AG04450 (cell line): ENCODE measurements at regions of chr12 and their contacts with region 1.

Region 1: DNA sequence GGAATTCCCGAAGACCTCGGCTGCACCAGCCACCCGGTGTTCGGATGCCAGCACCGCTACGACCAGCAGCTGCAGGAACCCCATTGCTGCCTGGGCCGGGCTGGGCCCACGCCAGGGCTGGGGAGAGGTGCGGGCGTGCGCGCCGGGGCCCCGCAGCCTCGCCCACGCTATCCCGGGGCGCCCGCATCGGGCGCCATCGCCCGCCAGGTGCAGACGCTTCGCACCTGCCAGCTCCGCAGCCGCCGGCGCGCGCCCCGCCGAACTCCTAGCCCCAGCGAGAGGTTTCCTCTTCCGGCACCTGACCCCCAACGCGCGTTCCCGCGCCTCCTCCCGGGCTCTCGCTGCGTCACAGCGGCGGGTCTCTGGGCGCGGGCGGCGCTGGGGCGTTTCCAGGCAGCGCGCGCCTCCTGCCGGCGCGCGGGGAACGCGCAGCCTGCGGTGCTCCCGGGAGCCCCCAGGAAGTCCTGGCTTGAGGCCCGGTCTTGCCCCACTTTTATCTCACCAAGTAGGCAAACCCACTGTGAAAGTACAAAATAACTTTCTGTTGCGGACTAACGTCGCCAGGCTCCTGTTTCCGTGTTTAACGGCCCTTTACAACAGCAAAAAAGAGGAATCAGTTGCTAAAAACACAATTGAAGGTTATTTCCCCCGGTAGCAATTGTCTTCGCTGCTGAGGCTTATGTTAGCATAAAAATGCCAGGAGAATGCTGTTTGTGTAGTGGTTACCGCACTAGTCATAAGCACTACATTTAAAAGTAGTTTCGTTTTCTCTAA is at the start of gene TM7SF3:
- DNase-seq: peak; percentile 48
- H3K4me3 ChIP-seq: peak within 1 kb of the TSS; percentile 85
- H3K27ac ChIP-seq: peak within 1 kb of the TSS; percentile 88
- H3K27me3 ChIP-seq: no peaks in the 10 kb centered on the region
- CTCF ChIP-seq: peak; percentile 81
- polyA plus RNA-seq, gene TM7SF3: 116 and 120 TPM in 2 replicates

Region 2: GRCh38 chr12:26979733-26980132 is 34.5 kb before region 1 on chr12:
- CTCF ChIA-PET with region 1: interaction called, 10 read pairs
- POLR2A ChIA-PET with region 1: no interaction called
- DNase-seq: no peak
- H3K4me3 ChIP-seq: no peak overlapping the region
- H3K27ac ChIP-seq: no peak overlapping the region
- H3K27me3 ChIP-seq: no peaks in the 10 kb centered on the region
- CTCF ChIP-seq: no peak

Region 3: GRCh38 chr12:27024291-27024690 is 10.0 kb after region 1 on chr12:
- CTCF ChIA-PET with region 1: interaction called, 19 read pairs
- POLR2A ChIA-PET with region 1: interaction called, 5 read pairs
- DNase-seq: no peak
- H3K4me3 ChIP-seq: no peak overlapping the region
- H3K27ac ChIP-seq: no peak overlapping the region
- H3K27me3 ChIP-seq: no peaks in the 10 kb centered on the region
- CTCF ChIP-seq: no peak

Region 4: GRCh38 chr12:27243804-27244683 is 229.8 kb after region 1 on chr12 and contains the start of gene STK38L:
- CTCF ChIA-PET with region 1: interaction called, 10 read pairs
- POLR2A ChIA-PET with region 1: no interaction called
- DNase-seq: peak; percentile 80
- H3K4me3 ChIP-seq: peak within 1 kb of the TSS; percentile 76
- H3K27ac ChIP-seq: peak within 1 kb of the TSS; percentile 87
- H3K27me3 ChIP-seq: no peaks in the 10 kb centered on the region
- CTCF ChIP-seq: peak; percentile 39
- polyA plus RNA-seq, gene STK38L: 11.9 and 18.4 TPM in 2 replicates